Esophagus muscularis mucosa (tissue), 4 donors: ENCODE measurements at regions of chr10 and their contacts with region 1.

Region 1: GRCh38 chr10:86899670-86900276 is 57.6 kb downstream of the MMRN2 start:
- DNase-seq: peak; percentile 91
- H3K4me3 ChIP-seq: no peak overlapping the region
- H3K27ac ChIP-seq: peak overlapping the region; percentile 44 to 68 (median 61)
- H3K4me1 ChIP-seq: peaks cover 17 to 34% (median 33%) of the 10 kb centered on the region in 4 donors
- H3K27me3 ChIP-seq: no peaks in the 10 kb centered on the region
- CTCF ChIP-seq: peak; percentile 73 to 84 (median 76)
- EP300 ChIP-seq: no peak
- POLR2A ChIP-seq: no peak

Region 2: GRCh38 chr10:86367152-86367951 is 532.4 kb before region 1 on chr10:
- intact Hi-C with region 1: no loop called
- DNase-seq: no peak
- H3K4me3 ChIP-seq: peak overlapping the region; percentile 57 to 69 (median 60)
- H3K27ac ChIP-seq: no peak overlapping the region
- H3K4me1 ChIP-seq: peaks cover 18 to 53% (median 46%) of the 10 kb centered on the region in 4 donors
- H3K27me3 ChIP-seq: peaks cover 10 to 99% (median 41%) of the 10 kb centered on the region in 4 donors
- CTCF ChIP-seq: no peak
- EP300 ChIP-seq: no peak
- POLR2A ChIP-seq: no peak

Region 3: DNA sequence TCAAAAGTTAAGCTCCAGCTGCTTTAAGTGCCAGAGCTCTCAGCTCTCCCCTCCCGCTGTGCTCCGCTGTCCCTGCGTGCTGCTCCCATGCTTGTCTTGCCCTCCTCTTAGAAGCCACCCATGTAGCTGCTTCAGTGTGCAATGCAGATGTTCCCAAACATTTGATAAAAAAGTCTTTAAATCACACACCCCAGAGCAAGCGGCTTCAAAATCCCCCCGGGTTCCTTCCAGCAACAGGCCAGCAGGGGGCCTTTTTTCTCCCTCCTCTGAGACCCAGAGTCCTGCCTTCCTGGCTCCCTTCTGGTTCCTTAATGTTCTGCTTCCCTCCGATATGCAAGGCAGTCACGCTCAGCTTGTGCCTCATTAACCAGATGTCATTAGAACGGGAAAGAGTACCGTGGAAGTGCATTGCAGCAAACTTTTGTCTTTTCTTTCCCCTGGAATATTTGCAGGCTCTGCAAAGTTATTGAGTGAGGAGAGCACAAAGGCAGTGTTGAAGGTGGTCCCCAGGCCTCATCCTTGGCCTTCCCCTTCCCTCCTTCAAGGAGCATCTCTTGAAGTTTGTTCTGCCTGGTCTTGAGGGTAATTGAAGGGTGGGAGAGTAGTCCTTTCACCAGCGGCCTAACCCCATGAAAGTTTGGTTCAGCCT is 205.9 kb before region 1 on chr10:
- intact Hi-C with region 1: loop called (anchors 5 kb)
- DNase-seq: no peak
- H3K4me3 ChIP-seq: no peak overlapping the region
- H3K27ac ChIP-seq: peak overlapping the region; percentile 31 to 51 (median 44)
- H3K4me1 ChIP-seq: peaks cover 34 to 54% (median 52%) of the 10 kb centered on the region in 4 donors
- H3K27me3 ChIP-seq: no peaks in the 10 kb centered on the region
- CTCF ChIP-seq: peak; percentile 48 to 75 (median 56)
- EP300 ChIP-seq: no peak
- POLR2A ChIP-seq: no peak

Region 4: DNA sequence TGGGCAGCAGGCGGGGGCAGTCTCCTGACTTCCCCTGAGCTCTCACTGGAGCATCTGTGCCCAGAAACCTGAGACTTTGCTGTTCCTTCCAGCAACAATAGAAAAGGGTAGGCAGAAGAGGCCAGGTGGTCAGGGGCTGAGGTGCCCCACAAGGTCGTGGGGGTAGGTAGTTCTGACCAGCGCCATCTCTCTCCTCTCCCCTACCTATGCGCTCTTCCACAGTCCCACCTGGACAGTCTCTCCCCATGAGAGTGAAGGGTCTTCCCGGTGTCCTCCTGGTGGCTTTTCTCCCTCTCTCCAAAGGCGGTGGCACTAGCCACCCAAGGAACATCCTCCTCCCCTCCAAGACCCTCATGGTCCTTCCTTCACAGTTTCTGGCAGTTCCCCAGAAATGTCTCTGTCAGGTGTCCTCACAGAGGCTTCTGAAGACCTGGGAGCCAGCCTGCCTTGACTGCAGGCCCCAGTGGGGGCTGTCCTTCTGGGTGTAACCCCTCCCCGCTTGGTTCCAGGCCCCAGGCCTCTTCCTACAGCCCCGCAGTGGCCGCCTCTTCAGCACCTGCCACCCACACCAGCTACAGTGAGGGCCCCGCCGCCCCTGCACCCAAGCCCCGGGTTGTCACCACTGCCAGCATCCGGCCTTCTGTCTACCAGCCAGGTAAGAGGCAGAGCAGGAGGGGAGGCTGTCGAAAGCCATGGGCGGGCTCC is 190.2 kb before region 1 on chr10:
- intact Hi-C with region 1: loop called (anchors 1 kb)
- DNase-seq: no peak
- H3K4me3 ChIP-seq: no peak overlapping the region
- H3K27ac ChIP-seq: peak overlapping the region; percentile 94 to 99 (median 98)
- H3K4me1 ChIP-seq: peaks cover 26 to 33% (median 29%) of the 10 kb centered on the region in 4 donors
- H3K27me3 ChIP-seq: no peaks in the 10 kb centered on the region
- CTCF ChIP-seq: no peak
- EP300 ChIP-seq: no peak
- POLR2A ChIP-seq: no peak

Region 5: DNA sequence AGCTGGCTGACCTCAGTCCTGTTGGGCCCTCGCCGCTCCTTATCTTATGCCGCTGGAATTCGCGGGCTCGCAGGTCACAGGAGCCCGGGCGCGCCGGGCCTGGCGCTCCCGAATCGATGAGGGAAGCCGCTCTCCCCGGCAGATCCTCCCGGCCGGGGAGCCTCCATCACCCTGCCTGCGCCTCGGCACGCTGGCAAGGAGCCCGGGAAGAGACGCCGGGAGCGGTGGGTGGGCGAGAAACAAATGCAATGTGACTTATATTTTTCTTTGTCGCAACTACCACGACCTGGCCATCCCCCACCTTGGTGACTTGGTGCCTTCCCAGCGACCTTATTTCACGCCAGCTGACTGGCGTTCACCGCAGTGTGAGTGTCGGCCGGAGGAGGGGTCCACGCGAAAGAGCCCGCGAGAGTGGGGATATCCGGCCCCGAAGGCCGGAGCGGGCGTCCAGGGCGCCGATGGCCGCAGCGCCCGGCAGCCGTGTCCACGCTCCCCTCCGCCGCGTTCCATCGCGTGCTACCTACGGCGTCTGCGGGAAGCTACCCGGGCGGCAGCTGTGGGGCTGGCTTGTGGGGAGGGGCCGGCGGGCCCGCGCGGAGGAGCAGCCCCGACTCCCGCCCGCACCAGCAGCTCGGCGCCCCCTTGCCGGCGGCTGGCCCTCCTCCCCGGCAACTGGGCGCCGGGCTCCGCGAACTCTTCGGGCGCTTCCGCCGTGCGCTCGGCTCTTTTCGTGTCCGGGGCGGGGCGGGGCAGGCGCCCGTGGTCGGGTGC is 143.8 kb before region 1 on chr10:
- intact Hi-C with region 1: loop called (anchors 5 kb)
- DNase-seq: peak; percentile 93
- H3K4me3 ChIP-seq: peak overlapping the region; percentile 70 to 94 (median 84)
- H3K27ac ChIP-seq: peak overlapping the region; percentile 93 to 100 (median 98)
- H3K4me1 ChIP-seq: peaks cover 22 to 66% (median 56%) of the 10 kb centered on the region in 4 donors
- H3K27me3 ChIP-seq: no peaks in the 10 kb centered on the region
- CTCF ChIP-seq: no peak
- EP300 ChIP-seq: no peak
- POLR2A ChIP-seq: peak; percentile 87